ENCODE measurements at regions of chrX and their contacts with region 1.

Region 1: GRCh38 chrX:14029425-14030173 is at the start of gene GEMIN8:
- DNase-seq: no peak
- ATAC-seq: peak; percentile 97
- H3K4me3 ChIP-seq: peak within 1 kb of the TSS; percentile 60 to 74
- H3K27ac ChIP-seq: peak within 1 kb of the TSS; percentile 81
- H3K4me1 ChIP-seq: peaks cover 5% of the 10 kb centered on the region; the same call in 1 of the 2 replicates
- H3K27me3 ChIP-seq: no peaks in the 10 kb centered on the region
- CTCF ChIP-seq: no peak
- total RNA-seq, gene GEMIN8: 11.2 TPM

Region 2: DNA sequence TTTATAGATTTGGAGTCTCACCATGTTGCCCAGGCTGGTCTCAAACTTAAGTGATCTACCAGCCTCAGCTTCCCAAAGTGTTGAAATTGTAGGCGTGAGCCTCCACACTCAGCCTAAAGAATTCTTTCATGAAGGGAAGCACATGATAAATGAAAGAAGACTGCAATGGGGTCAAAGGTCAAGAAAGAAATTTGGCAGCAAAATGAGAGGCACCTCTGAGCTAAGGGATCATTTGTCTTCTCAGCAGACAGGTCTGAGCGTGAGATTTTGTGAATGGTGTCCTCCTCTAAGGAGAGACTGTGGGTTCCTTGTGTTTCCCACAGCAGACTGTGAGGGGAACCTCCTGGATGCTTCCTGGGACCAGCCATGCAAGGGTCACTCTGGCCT is 517.7 kb before region 1 on chrX:
- CTCF ChIA-PET with region 1: no interaction called
- POLR2A ChIA-PET with region 1: no interaction called
- in situ Hi-C with region 1: no loop called
- intact Hi-C with region 1: loop called (anchors 5 kb)
- DNase-seq: no peak
- ATAC-seq: no peak
- H3K4me3 ChIP-seq: no peak overlapping the region
- H3K27ac ChIP-seq: no peak overlapping the region
- H3K4me1 ChIP-seq: no peaks in the 10 kb centered on the region
- H3K27me3 ChIP-seq: no peaks in the 10 kb centered on the region
- CTCF ChIP-seq: no peak

Region 3: GRCh38 chrX:13658602-13659001 is 371.0 kb before region 1 on chrX:
- CTCF ChIA-PET with region 1: interaction called, 3 read pairs
- POLR2A ChIA-PET with region 1: no interaction called
- in situ Hi-C with region 1: no loop called
- intact Hi-C with region 1: loop called (anchors 5 kb)
- DNase-seq: no peak
- ATAC-seq: no peak
- H3K4me3 ChIP-seq: no peak overlapping the region
- H3K27ac ChIP-seq: no peak overlapping the region
- H3K4me1 ChIP-seq: no peaks in the 10 kb centered on the region
- H3K27me3 ChIP-seq: no peaks in the 10 kb centered on the region
- CTCF ChIP-seq: peak; percentile 60; the same call in 1 of the 2 replicates

Region 4: GRCh38 chrX:13750204-13750603 is 279.4 kb before region 1 on chrX:
- CTCF ChIA-PET with region 1: no interaction called
- POLR2A ChIA-PET with region 1: no interaction called
- in situ Hi-C with region 1: no loop called
- intact Hi-C with region 1: loop called (anchors 5 kb)
- DNase-seq: no peak
- ATAC-seq: peak; percentile 58; the same call in 1 of the 2 replicates
- H3K4me3 ChIP-seq: no peak overlapping the region
- H3K27ac ChIP-seq: no peak overlapping the region
- H3K4me1 ChIP-seq: no peaks in the 10 kb centered on the region
- H3K27me3 ChIP-seq: no peaks in the 10 kb centered on the region
- CTCF ChIP-seq: peak; percentile 63

Measured in Panc1 (cell line).